ENCODE measurements at regions of chr2 and their contacts with region 1.

Region 1: DNA sequence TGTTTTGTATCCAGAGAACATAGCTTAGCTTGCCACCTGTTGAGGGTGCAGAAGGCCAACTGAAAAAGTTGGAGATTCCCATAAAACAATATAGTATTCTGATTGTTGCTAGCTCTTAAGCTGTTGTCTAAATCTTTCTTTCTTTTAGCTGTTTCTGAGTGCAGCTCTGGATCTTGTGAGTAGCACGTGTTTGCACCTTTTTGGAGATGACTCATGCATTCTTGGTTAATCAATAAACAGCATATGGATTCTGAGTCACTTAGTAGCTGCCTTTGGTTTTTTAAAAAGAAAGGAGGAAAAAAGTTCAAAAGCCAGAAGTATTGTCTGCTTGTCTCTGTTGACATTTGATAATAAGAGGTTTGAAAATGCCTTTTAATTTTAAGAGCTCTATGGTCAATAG is 483.0 kb upstream of the FSIP2 start:
- ATAC-seq: no peak
- H3K4me3 ChIP-seq: no peak overlapping the region
- H3K27ac ChIP-seq: no peak overlapping the region
- H3K4me1 ChIP-seq: no peaks in the 10 kb centered on the region

Region 2: DNA sequence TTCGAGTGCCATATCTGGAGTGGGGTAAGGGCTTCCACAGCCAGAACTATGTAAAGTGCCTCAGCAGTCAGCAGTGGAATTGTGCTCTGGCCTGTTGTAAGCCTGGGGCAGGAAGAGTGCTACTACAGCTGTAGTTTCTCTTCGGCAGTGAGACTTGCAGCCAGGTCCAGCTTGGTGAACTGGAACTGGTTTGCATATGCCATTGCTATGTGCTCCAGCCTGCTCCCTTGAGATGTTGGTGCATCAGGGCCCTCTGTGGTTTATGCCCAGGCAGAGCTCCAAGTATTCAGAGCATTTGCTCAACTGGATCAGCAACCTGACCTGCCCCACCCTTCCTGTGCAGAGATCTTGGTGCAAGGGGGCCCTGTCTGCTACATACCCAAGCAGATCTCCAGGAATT is 609.4 kb before region 1 on chr2:
- in situ Hi-C with region 1: loop called in 1 of 9 experiments (anchors 25 kb)
- ATAC-seq: peak in 3 of 8 experiments; percentile 70 to 94 (median 87)
- H3K4me3 ChIP-seq: no peak overlapping the region
- H3K27ac ChIP-seq: no peak overlapping the region
- H3K4me1 ChIP-seq: no peaks in the 10 kb centered on the region

Region 3: GRCh38 chr2:185689906-185690539 is 434.5 kb after region 1 on chr2:
- in situ Hi-C with region 1: no loop called
- ATAC-seq: peak in 1 of 8 experiments; percentile 15
- H3K4me3 ChIP-seq: no peak overlapping the region
- H3K27ac ChIP-seq: no peak overlapping the region
- H3K4me1 ChIP-seq: no peaks in the 10 kb centered on the region